Gastrocnemius medialis (tissue), 4 donors: ENCODE measurements at regions of chr7 and their contacts with region 1.

Region 1: GRCh38 chr7:43834463-43835251 is 34.7 kb downstream of the MRPS24 start:
- DNase-seq: no peak
- ATAC-seq: no peak
- H3K4me3 ChIP-seq: peak overlapping the region; percentile 11 to 26 (median 20)
- H3K27ac ChIP-seq: no peak overlapping the region
- H3K4me1 ChIP-seq: no peaks in the 10 kb centered on the region
- H3K27me3 ChIP-seq: peaks cover 0 to 9% (median 0%) of the 10 kb centered on the region in 3 donors
- CTCF ChIP-seq: no peak
- POLR2A ChIP-seq: no peak

Region 2: GRCh38 chr7:43721193-43721806 is 113.4 kb before region 1 on chr7:
- in situ Hi-C with region 1: loop called in 1 of 4 experiments (anchors 25 kb)
- intact Hi-C with region 1: loop called (anchors 5 kb)
- DNase-seq: no peak
- ATAC-seq: peak in 1 of 2 donors; percentile 46
- H3K4me3 ChIP-seq: no peak overlapping the region
- H3K27ac ChIP-seq: peak overlapping the region in 2 of 4 donors; percentile 14 to 59
- H3K4me1 ChIP-seq: peaks cover 36 to 44% of the 10 kb centered on the region in 2 donors
- H3K27me3 ChIP-seq: no peaks in the 10 kb centered on the region
- CTCF ChIP-seq: peak; percentile 49 to 85 (median 73)
- POLR2A ChIP-seq: no peak

Region 3: GRCh38 chr7:43869867-43870240 is 35.2 kb after region 1 on chr7:
- in situ Hi-C with region 1: no loop called
- intact Hi-C with region 1: no loop called
- DNase-seq: peak; percentile 30 to 52
- ATAC-seq: peak; percentile 63 to 65
- H3K4me3 ChIP-seq: peak overlapping the region; percentile 77 to 94 (median 82)
- H3K27ac ChIP-seq: peak overlapping the region; percentile 89 to 94 (median 92)
- H3K4me1 ChIP-seq: peaks cover 31 to 37% of the 10 kb centered on the region in 2 donors
- H3K27me3 ChIP-seq: no peaks in the 10 kb centered on the region
- CTCF ChIP-seq: no peak
- POLR2A ChIP-seq: no peak